Caco-2 (cell line): ENCODE measurements at regions of chr20 and their contacts with region 1.

Region 1: GRCh38 chr20:49676581-49677291 is 36.9 kb downstream of the B4GALT5 start:
- DNase-seq: peak in 1 of 2 experiments; percentile 33
- H3K4me3 ChIP-seq: no peak overlapping the region
- H3K4me3 Mint-ChIP-seq: peak overlapping the region; percentile 72
- H3K27ac Mint-ChIP-seq: peak overlapping the region; percentile 98
- H3K4me1 ChIP-seq: peaks cover 92% of the 10 kb centered on the region
- H3K4me1 Mint-ChIP-seq: peaks cover 77% of the 10 kb centered on the region
- H3K27me3 ChIP-seq: no peaks in the 10 kb centered on the region
- H3K27me3 Mint-ChIP-seq: no peaks in the 10 kb centered on the region
- CTCF ChIP-seq: no peak

Region 2: GRCh38 chr20:49641683-49642656 is 34.8 kb before region 1 on chr20:
- CTCF ChIA-PET with region 1: no interaction called
- POLR2A ChIA-PET with region 1: no interaction called
- intact Hi-C with region 1: no loop called
- DNase-seq: no peak
- H3K4me3 ChIP-seq: no peak overlapping the region
- H3K4me3 Mint-ChIP-seq: no peak overlapping the region
- H3K27ac Mint-ChIP-seq: no peak overlapping the region
- H3K4me1 ChIP-seq: no peaks in the 10 kb centered on the region
- H3K4me1 Mint-ChIP-seq: no peaks in the 10 kb centered on the region
- H3K27me3 ChIP-seq: no peaks in the 10 kb centered on the region
- H3K27me3 Mint-ChIP-seq: no peaks in the 10 kb centered on the region
- CTCF ChIP-seq: no peak

Region 3: DNA sequence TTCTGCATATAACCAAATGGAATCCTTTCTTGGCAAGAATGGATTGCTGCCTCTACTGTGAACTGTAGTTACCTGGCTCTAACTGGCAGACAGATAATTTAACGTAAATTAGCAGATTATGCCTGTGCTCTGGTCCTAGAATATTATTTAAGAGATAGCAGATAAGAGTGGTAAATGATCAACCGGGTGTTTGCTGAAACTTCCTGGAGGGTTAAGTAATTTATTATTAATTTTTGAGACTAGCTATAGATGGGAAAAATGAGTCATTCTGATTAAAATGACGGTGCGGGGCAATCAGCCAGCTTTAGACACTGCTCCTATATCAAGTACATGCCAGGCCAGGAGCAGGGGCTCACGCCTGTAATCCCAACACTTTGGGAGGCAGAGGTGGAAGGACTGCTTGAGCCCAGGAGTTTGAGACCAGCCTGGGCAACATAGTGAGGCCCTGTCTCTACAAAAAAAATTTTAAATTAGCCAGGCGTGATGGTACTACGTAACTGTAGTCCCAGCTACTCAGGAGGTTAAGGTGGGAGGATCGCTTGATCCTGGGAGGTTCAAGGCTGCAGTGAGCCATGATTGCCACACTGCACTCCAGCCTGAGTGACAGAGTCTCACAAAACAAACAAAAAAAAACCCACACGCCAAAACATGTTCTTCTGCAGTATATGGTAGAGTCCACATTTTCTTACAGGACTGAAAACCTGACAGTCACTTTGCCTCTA is 14.3 kb after region 1 on chr20:
- CTCF ChIA-PET with region 1: interaction called, 6 read pairs
- POLR2A ChIA-PET with region 1: no interaction called
- intact Hi-C with region 1: loop called (anchors 1 kb)
- DNase-seq: peak; percentile 55 to 69
- H3K4me3 ChIP-seq: no peak overlapping the region
- H3K4me3 Mint-ChIP-seq: peak overlapping the region; percentile 35
- H3K27ac Mint-ChIP-seq: peak overlapping the region; percentile 75
- H3K4me1 ChIP-seq: peaks cover 63% of the 10 kb centered on the region
- H3K4me1 Mint-ChIP-seq: peaks cover 69% of the 10 kb centered on the region
- H3K27me3 ChIP-seq: no peaks in the 10 kb centered on the region
- H3K27me3 Mint-ChIP-seq: no peaks in the 10 kb centered on the region
- CTCF ChIP-seq: no peak

Region 4: DNA sequence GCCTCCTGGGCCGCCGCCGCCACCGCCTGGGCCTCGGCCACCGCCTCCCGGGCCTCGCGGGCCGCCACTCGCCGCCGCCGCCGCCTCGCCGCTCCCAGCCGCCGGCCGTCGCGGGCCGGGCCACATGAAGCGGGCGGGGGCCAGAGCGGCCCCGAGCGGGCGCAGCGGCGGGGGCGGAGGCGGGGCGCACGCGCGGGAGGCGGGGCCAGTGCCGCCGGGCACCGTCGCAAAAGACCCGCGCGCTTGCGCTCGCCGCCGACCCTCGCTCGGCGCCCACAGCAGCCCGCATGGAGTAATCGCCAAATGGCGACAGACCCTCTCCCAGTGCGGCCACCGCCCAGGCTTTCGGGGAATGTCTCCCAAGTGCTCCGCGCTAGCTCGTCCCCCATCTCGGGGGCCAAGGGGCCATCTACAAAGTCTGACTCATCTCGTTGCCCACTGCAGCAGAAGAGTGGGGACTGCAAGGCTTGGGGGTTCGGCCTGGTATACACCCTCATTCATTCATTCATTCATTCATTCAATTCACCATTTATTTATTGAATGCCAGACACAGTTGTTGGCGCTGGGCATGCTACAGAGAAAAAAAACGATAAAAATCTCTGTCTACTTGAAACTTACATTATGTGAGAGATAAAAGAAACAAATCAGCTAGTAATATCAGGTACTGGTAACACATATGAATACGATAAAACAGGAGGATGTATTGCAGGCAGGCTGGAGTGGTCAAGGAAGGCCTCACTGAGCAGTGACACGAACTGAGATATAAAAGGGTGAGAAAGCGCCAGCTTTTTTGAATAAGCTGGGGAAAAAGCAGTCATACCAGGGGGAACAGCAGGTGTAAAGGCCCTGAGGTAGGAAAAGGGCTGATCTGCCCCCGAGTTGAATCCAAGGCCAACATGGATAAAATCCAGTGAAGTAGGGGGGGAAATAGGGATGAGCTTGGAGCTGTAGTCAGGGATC is 37.3 kb after region 1 on chr20 and contains the start of gene B4GALT5:
- CTCF ChIA-PET with region 1: interaction called, 3 read pairs
- POLR2A ChIA-PET with region 1: no interaction called
- intact Hi-C with region 1: loop called (anchors 1 kb)
- DNase-seq: peak; percentile 95
- H3K4me3 ChIP-seq: peak within 1 kb of the TSS; percentile 65
- H3K4me3 Mint-ChIP-seq: peak within 1 kb of the TSS; percentile 81
- H3K27ac Mint-ChIP-seq: peak within 1 kb of the TSS; percentile 79
- H3K4me1 ChIP-seq: peaks cover 25% of the 10 kb centered on the region
- H3K4me1 Mint-ChIP-seq: peaks cover 37% of the 10 kb centered on the region
- H3K27me3 ChIP-seq: no peaks in the 10 kb centered on the region
- H3K27me3 Mint-ChIP-seq: no peaks in the 10 kb centered on the region
- CTCF ChIP-seq: no peak
- total RNA-seq, gene B4GALT5: 65.0 and 67.1 TPM in 2 replicates

Region 5: DNA sequence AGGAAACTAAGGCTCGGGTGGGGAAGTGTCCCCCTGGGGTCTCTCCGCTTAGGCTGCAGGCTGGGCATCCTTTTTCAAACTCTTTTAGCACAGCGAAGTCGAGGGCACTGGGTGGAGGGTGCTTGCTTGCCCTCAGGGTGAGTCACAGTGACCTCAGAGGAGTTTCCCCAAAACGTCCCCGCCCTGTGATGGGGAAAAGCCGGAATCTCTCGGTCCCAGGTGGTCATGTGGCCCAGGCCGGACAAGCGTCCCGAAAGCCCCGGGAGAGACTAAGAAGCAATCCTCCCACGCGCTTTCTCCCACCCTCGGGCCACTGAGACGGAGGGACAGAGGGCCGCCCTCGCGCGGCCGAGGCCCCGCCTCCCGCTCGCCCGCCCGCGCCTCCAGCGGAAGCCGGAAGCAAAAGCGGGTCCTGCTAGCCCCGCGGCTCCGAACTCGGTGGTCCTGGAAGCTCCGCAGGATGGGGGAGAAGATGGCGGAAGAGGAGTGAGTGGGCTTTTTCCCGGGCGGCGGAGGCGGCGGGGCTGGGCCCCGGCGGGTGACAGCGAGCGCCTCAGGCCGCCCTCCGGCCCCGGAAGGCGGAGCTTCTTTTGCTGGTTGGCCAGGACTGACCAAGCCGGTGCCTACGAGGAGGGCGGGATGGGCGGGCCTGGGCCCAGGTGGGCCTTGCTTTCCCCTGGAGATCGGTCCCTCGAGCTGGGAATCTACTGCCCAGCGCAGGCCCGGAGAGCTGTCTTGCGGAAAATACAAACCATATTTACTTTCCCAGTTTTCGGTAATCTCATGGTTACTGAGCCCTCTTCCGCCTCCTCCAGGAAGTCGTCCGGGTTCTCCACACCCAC is 135.9 kb after region 1 on chr20 and contains the start of gene SLC9A8:
- CTCF ChIA-PET with region 1: interaction called, 6 read pairs
- POLR2A ChIA-PET with region 1: interaction called, 6 read pairs
- intact Hi-C with region 1: loop called (anchors 1 kb)
- DNase-seq: peak; percentile 97 to 98
- H3K4me3 ChIP-seq: peak within 1 kb of the TSS; percentile 68
- H3K4me3 Mint-ChIP-seq: peak within 1 kb of the TSS; percentile 97
- H3K27ac Mint-ChIP-seq: peak within 1 kb of the TSS; percentile 96
- H3K4me1 ChIP-seq: peaks cover 25% of the 10 kb centered on the region
- H3K4me1 Mint-ChIP-seq: peaks cover 41% of the 10 kb centered on the region
- H3K27me3 ChIP-seq: no peaks in the 10 kb centered on the region
- H3K27me3 Mint-ChIP-seq: no peaks in the 10 kb centered on the region
- CTCF ChIP-seq: peak; percentile 38 to 44
- total RNA-seq, gene SLC9A8: 19.5 and 21.4 TPM in 2 replicates

Region 6: GRCh38 chr20:49915378-49916145 is 238.8 kb after region 1 on chr20 and contains the start of gene SPATA2:
- CTCF ChIA-PET with region 1: no interaction called
- POLR2A ChIA-PET with region 1: interaction called, 11 read pairs
- intact Hi-C with region 1: no loop called
- DNase-seq: peak; percentile 100
- H3K4me3 ChIP-seq: peak within 1 kb of the TSS; percentile 80
- H3K4me3 Mint-ChIP-seq: peak within 1 kb of the TSS; percentile 99
- H3K27ac Mint-ChIP-seq: peak within 1 kb of the TSS; percentile 100
- H3K4me1 ChIP-seq: peaks cover 20% of the 10 kb centered on the region
- H3K4me1 Mint-ChIP-seq: peaks cover 25% of the 10 kb centered on the region
- H3K27me3 ChIP-seq: no peaks in the 10 kb centered on the region
- H3K27me3 Mint-ChIP-seq: no peaks in the 10 kb centered on the region
- CTCF ChIP-seq: no peak
- total RNA-seq, gene SPATA2: 29.0 TPM in 2 replicates